Activated B cell treated with CpG ODN at 0.5 μM for 24 hours (primary cell): ENCODE measurements at regions of chr11 and their contacts with region 1.

Region 1: GRCh38 chr11:83193315-83194280 is at the start of gene ANKRD42:
- DNase-seq: peak; percentile 75
- ATAC-seq: peak; percentile 63
- H3K4me3 Mint-ChIP-seq: peak within 1 kb of the TSS; percentile 100
- H3K27ac Mint-ChIP-seq: peak within 1 kb of the TSS; percentile 98
- H3K4me1 Mint-ChIP-seq: peaks cover 51% of the 10 kb centered on the region
- H3K27me3 Mint-ChIP-seq: no peaks in the 10 kb centered on the region
- CTCF ChIP-seq: no peak
- total RNA-seq, gene ANKRD42: 6.6 and 7.4 TPM in 2 replicates

Region 2: GRCh38 chr11:82927254-82927880 is 266.2 kb before region 1 on chr11:
- CTCF ChIA-PET with region 1: no interaction called
- POLR2A ChIA-PET with region 1: no interaction called
- intact Hi-C with region 1: loop called (anchors 5 kb)
- DNase-seq: no peak
- ATAC-seq: peak; percentile 76
- H3K4me3 Mint-ChIP-seq: peak overlapping the region; percentile 45
- H3K27ac Mint-ChIP-seq: peak overlapping the region; percentile 75
- H3K4me1 Mint-ChIP-seq: peaks cover 85% of the 10 kb centered on the region
- H3K27me3 Mint-ChIP-seq: no peaks in the 10 kb centered on the region
- CTCF ChIP-seq: no peak

Region 3: GRCh38 chr11:83174008-83174407 is 19.6 kb before region 1 on chr11:
- CTCF ChIA-PET with region 1: no interaction called
- POLR2A ChIA-PET with region 1: no interaction called
- intact Hi-C with region 1: loop called (anchors 2 kb)
- DNase-seq: no peak
- ATAC-seq: peak; percentile 43
- H3K4me3 Mint-ChIP-seq: peak overlapping the region; percentile 55
- H3K27ac Mint-ChIP-seq: peak overlapping the region; percentile 35
- H3K4me1 Mint-ChIP-seq: peaks cover 71% of the 10 kb centered on the region
- H3K27me3 Mint-ChIP-seq: no peaks in the 10 kb centered on the region
- CTCF ChIP-seq: no peak

Region 4: GRCh38 chr11:83249972-83250593 is 56.5 kb after region 1 on chr11:
- CTCF ChIA-PET with region 1: interaction called, 4 read pairs
- POLR2A ChIA-PET with region 1: no interaction called
- intact Hi-C with region 1: loop called (anchors 2 kb)
- DNase-seq: no peak
- ATAC-seq: peak; percentile 75
- H3K4me3 Mint-ChIP-seq: no peak overlapping the region
- H3K27ac Mint-ChIP-seq: no peak overlapping the region
- H3K4me1 Mint-ChIP-seq: peaks cover 13% of the 10 kb centered on the region
- H3K27me3 Mint-ChIP-seq: no peaks in the 10 kb centered on the region
- CTCF ChIP-seq: peak; percentile 90